OCI-LY7 (cell line): ENCODE measurements at regions of chr5 and their contacts with region 1.

Region 1: DNA sequence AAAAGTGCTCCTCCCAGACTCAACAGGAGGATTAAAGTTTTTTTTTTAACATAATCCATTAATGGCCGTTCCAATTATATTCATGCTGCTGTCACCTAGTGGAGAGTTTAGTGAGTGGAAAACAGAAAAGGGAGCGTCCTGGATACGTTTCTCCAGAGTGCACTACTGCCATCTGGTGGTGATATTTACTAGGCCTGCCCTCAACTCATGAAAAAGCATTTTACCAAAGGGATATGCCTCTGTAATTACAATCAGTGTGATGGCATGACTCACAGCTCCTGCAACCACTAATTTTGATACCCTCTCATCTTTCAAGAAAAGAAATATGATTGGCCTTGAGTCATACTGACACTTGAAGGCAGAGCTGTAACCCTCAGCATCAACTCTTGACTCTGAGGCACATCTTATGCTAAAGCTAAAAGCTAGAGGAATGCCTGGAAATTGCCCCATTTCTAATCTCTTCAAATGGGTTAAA is 20.0 kb downstream of the MINAR2 start:
- DNase-seq: peak; percentile 83
- H3K4me3 ChIP-seq: no peak overlapping the region
- H3K27ac ChIP-seq: no peak overlapping the region
- H3K4me1 ChIP-seq: no peaks in the 10 kb centered on the region
- CTCF ChIP-seq: peak; percentile 99

Region 2: DNA sequence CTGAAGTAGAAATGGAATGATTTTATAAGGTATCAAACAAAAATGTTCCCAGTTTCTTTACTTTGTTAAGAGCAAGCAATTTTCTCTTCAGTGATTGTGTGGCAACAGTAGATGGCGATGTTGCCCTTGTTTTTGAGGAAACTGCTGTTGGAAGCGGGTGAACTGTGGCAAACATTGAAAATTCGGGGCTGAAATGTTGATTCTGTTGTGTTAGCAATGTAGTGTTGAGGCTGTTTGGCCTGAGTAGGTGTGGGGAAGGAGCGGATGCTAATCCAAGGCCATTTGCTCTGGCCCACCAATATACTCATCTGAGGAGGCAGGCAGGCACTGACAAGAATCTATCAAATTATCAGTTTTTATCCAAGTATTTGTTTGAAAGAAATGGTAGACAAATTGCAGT is 1554.6 kb before region 1 on chr5:
- CTCF ChIA-PET with region 1: no interaction called
- POLR2A ChIA-PET with region 1: no interaction called
- intact Hi-C with region 1: loop called (anchors 5 kb)
- DNase-seq: peak; percentile 56
- H3K4me3 ChIP-seq: no peak overlapping the region
- H3K27ac ChIP-seq: no peak overlapping the region
- H3K4me1 ChIP-seq: no peaks in the 10 kb centered on the region
- CTCF ChIP-seq: peak; percentile 85

Region 3: DNA sequence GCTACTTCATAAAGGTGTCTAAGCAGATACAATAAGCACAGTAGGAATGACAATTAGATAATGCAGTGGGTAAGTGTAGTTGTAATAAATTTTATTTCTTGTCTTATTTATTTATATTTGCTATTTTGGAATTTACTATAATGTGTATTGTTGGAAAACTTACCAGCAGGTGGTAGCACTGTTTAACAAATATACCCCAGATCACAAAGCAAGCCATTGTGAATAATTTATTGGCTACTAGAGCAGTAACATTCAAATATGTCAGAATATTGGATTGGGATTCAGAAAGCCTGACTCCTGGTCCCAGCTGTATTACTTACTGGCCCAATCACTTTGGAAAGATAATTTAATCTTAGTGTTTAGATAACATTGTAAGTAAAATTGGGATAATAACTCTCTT is 595.4 kb before region 1 on chr5:
- CTCF ChIA-PET with region 1: no interaction called
- POLR2A ChIA-PET with region 1: no interaction called
- intact Hi-C with region 1: loop called (anchors 10 kb)
- DNase-seq: no peak
- H3K4me3 ChIP-seq: no peak overlapping the region
- H3K27ac ChIP-seq: no peak overlapping the region
- H3K4me1 ChIP-seq: no peaks in the 10 kb centered on the region
- CTCF ChIP-seq: peak; percentile 26; the same call in 1 of the 2 replicates

Region 4: GRCh38 chr5:129547137-129547536 is 220.8 kb before region 1 on chr5:
- CTCF ChIA-PET with region 1: no interaction called
- POLR2A ChIA-PET with region 1: no interaction called
- intact Hi-C with region 1: no loop called
- DNase-seq: no peak
- H3K4me3 ChIP-seq: no peak overlapping the region
- H3K27ac ChIP-seq: no peak overlapping the region
- H3K4me1 ChIP-seq: no peaks in the 10 kb centered on the region
- CTCF ChIP-seq: no peak

Region 5: GRCh38 chr5:129664337-129664937 is 103.5 kb before region 1 on chr5:
- CTCF ChIA-PET with region 1: no interaction called
- POLR2A ChIA-PET with region 1: no interaction called
- intact Hi-C with region 1: loop called (anchors 5 kb)
- DNase-seq: peak; percentile 41
- H3K4me3 ChIP-seq: no peak overlapping the region
- H3K27ac ChIP-seq: no peak overlapping the region
- H3K4me1 ChIP-seq: no peaks in the 10 kb centered on the region
- CTCF ChIP-seq: peak; percentile 96

Region 6: DNA sequence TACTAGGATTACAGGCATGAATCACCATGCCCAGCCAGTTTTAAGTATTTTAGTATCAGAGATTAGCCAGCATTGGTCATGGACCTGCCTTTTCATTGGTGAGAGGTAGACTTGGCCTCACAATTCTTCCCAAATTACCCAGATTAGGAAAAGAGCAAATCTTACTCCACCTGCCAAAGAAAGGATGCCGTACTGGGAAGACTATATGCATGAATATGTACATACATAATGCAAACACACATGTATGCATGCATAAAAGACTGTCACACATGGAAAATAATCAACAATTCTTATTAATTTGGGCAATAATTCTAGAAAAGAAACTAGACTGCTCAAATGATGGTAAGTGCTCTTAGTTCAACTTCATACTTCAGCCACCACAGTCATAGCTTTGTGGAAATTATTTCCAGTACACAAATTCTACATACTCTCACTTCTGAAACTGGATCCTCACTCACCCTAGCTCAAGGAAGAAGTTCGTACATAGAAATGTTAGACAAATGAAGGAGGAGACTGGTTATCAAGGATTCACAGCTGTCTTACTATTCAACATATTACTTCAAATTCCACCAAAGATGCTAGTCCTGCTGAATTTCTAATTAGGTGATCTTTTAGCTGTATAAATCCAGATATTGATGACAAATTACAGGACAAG is 53.7 kb after region 1 on chr5:
- CTCF ChIA-PET with region 1: no interaction called
- POLR2A ChIA-PET with region 1: no interaction called
- intact Hi-C with region 1: no loop called
- DNase-seq: no peak
- H3K4me3 ChIP-seq: no peak overlapping the region
- H3K27ac ChIP-seq: no peak overlapping the region
- H3K4me1 ChIP-seq: no peaks in the 10 kb centered on the region
- CTCF ChIP-seq: no peak

Region 7: GRCh38 chr5:129852747-129853352 is 84.9 kb after region 1 on chr5:
- CTCF ChIA-PET with region 1: no interaction called
- POLR2A ChIA-PET with region 1: no interaction called
- intact Hi-C with region 1: loop called (anchors 1 kb)
- DNase-seq: peak; percentile 57
- H3K4me3 ChIP-seq: no peak overlapping the region
- H3K27ac ChIP-seq: no peak overlapping the region
- H3K4me1 ChIP-seq: no peaks in the 10 kb centered on the region
- CTCF ChIP-seq: peak; percentile 98

Region 8: GRCh38 chr5:131109540-131110255 is 1341.8 kb after region 1 on chr5:
- CTCF ChIA-PET with region 1: no interaction called
- POLR2A ChIA-PET with region 1: no interaction called
- intact Hi-C with region 1: loop called (anchors 5 kb)
- DNase-seq: peak; percentile 47
- H3K4me3 ChIP-seq: no peak overlapping the region
- H3K27ac ChIP-seq: no peak overlapping the region
- H3K4me1 ChIP-seq: no peaks in the 10 kb centered on the region
- CTCF ChIP-seq: peak; percentile 90